A549 (cell line): ENCODE measurements at regions of chr10 and their contacts with region 1.

Region 1: DNA sequence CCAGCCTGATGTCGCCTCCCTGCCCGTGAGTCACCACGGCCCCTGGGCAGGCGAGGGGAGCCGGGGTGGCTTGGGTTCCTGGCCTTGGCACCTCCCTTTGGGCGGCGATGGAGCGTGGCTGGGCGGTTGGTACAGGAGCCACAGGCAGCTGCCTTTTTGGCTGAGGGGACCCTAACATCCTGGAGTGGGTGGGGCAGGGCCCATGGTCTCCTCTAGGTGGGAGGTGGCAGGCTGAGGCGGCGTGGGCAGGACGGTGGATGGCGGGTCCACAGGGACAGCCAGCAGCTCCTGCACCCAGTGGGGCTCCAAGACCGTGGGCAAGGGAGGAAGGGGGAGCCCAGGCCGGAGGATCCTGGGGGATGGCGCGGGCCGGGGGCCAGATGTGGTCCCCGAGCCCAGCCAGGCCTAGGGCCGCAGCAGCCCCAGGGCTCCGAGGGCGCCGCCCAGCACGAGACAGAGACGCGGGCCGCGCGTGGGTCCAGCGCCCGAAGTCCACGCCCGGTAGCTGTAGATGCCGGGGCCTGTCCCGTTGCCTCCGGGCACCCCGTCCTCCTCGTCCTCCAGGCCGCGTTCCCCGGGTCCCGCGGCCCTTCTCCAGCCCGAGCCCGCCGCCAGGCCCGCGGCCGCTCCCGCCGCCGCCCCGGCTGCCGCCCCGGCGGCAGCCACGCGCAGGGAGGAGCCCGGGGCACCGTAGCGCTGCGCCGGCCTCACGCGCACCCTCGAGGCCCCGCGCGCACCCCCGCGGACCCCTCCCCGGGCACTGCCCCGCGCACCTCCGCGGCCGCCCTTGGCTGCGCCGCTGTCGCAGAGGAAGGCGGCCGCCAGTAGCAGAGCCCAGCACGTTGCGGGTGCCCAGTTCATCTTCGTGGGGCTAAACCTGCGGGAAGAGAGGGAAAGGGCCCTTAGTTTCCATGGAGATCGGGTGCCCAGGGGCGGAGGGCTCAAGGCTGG is 1.3 kb downstream of the SPRN start:
- DNase-seq: no peak
- ATAC-seq: peak; percentile 28; a peak in 5 of 6 replicates
- H3K4me3 ChIP-seq: peak overlapping the region; percentile 36; the same call in 2 of the 3 replicates
- H3K27ac ChIP-seq: peak overlapping the region in 1 of 2 experiments; percentile 71; a peak in 2 of 6 replicates
- H3K4me1 ChIP-seq: peaks cover 7% of the 10 kb centered on the region; the same call in 2 of the 3 replicates
- CTCF ChIP-seq: no peak
- EP300 ChIP-seq: no peak
- POLR2A ChIP-seq: no peak
- RAD21 ChIP-seq: no peak

Region 2: GRCh38 chr10:133163889-133164815 is 258.9 kb before region 1 on chr10:
- CTCF ChIA-PET with region 1: no interaction called
- POLR2A ChIA-PET with region 1: no interaction called
- DNase-seq: no peak
- ATAC-seq: no peak
- H3K4me3 ChIP-seq: no peak overlapping the region
- H3K27ac ChIP-seq: no peak overlapping the region
- H3K4me1 ChIP-seq: peaks cover 13% of the 10 kb centered on the region
- CTCF ChIP-seq: no peak
- EP300 ChIP-seq: no peak
- POLR2A ChIP-seq: no peak
- RAD21 ChIP-seq: no peak

Region 3: DNA sequence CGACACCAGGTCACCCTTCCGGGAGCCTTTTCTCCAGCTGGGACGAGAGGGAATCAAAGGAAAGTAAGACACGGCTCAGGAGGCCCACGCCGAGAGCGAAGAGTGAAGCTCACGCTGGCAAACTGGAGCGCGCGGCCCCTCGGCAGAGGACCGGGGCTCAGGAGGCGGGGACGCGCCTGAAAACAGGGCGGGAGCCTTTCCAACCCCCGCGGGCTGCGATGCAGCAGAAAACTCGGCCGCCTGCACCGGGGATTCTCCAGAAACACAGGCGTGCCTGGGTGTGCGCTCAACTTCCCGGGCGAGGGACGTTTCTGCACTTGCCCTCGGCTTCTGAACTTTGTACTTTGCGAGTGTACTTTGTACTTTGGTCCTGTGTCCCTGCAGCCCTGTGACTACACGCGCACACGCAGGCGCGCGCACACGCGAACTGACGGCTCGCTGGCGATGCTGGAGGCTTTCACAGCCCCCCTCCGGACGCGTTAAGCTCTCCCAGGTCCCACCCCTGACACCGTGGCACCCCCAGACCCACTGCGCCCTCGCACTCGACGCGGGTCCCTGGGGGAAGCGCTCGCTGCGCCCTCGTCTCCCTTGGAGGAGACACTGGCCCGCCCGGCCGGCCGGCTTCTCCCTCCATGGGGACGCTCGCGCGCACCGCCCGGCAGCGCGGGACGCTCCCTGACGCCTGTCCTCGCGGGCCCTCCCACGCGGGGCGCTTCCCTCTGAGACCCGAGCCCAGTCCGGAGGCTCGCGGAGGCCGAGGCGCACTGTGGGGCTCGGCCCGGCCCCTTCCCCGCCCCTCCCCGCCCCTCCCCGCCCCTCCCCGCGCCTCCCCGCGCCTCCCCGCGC is 44.6 kb before region 1 on chr10:
- CTCF ChIA-PET with region 1: no interaction called
- POLR2A ChIA-PET with region 1: no interaction called
- DNase-seq: peak; percentile 45 to 48
- ATAC-seq: peak; percentile 67 to 81
- H3K4me3 ChIP-seq: peak overlapping the region; percentile 94
- H3K27ac ChIP-seq: peak overlapping the region; percentile 76 to 92
- H3K4me1 ChIP-seq: peaks cover 9% of the 10 kb centered on the region; the same call in 1 of the 3 replicates
- CTCF ChIP-seq: no peak
- EP300 ChIP-seq: no peak
- POLR2A ChIP-seq: peak; percentile 36
- RAD21 ChIP-seq: no peak

Region 4: GRCh38 chr10:133438711-133439273 is 15.7 kb after region 1 on chr10:
- CTCF ChIA-PET with region 1: interaction called, 10 read pairs
- POLR2A ChIA-PET with region 1: no interaction called
- DNase-seq: peak in 1 of 2 experiments; percentile 40
- ATAC-seq: peak; percentile 26 to 62; a peak in 3 of 6 replicates
- H3K4me3 ChIP-seq: no peak overlapping the region
- H3K27ac ChIP-seq: no peak overlapping the region
- H3K4me1 ChIP-seq: no peaks in the 10 kb centered on the region
- CTCF ChIP-seq: 0 out of 3 replicates have a peak, but pooled peaks have one; percentile 5
- EP300 ChIP-seq: no peak
- POLR2A ChIP-seq: no peak
- RAD21 ChIP-seq: peak in 1 of 2 experiments; percentile 24; a peak in 1 of 5 replicates